CD4-positive, alpha-beta T cell (primary cell): ENCODE measurements at regions of chr3 and their contacts with region 1.

Region 1: GRCh38 chr3:43769471-43770425 is 79.0 kb downstream of the ABHD5 start:
- DNase-seq: peak; percentile 62 to 85 (median 69)
- ATAC-seq: peak; percentile 65
- H3K4me3 ChIP-seq: peak overlapping the region; percentile 4
- H3K4me3 Mint-ChIP-seq: no peak overlapping the region
- H3K27ac ChIP-seq: peak overlapping the region in 1 of 2 donors; percentile 71
- H3K27ac Mint-ChIP-seq: peak overlapping the region; percentile 64
- H3K4me1 ChIP-seq: peaks cover 42% of the 10 kb centered on the region
- H3K4me1 Mint-ChIP-seq: peaks cover 37% of the 10 kb centered on the region
- H3K27me3 ChIP-seq: no peaks in the 10 kb centered on the region
- H3K27me3 Mint-ChIP-seq: peaks cover 5% of the 10 kb centered on the region
- CTCF ChIP-seq: peak; percentile 90

Region 2: DNA sequence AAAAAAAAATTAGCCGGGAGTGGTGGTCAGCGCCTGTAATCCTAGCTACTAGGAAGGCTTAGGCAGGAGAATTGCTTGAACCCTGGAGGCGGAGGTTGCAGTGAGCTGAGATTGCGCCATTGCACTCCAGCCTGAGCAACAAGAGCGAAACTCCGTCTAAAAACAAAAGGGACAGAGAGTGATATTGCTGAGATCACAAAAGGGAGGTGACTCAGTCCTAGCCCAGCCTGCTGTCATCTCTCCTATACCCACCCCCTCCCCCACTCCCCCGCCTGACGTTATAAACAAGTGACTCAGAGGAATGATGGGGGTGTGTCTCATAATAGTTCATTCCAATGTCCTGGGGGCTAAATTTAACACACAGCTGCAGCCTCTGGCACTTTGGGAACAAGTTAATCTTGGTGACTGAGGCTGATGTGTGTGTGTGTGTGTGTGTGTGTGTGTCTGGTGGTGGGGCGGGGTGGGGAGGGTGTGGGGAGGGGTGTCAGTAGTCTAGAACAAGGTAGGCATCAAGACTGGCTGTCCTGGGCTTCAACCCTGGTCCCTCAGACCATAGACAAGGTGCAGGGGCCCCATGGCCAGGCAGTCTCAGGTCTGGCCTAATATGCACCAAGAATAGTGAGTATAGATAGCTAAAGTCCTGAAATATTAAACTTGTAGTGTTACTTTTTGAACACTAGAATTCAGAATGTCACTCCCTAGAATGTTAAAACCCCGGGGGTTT is 1085.7 kb before region 1 on chr3:
- CTCF ChIA-PET with region 1: no interaction called
- POLR2A ChIA-PET with region 1: no interaction called
- intact Hi-C with region 1: no loop called
- DNase-seq: peak in 2 of 14 experiments; percentile 27 to 29
- ATAC-seq: no peak
- H3K4me3 ChIP-seq: no peak overlapping the region
- H3K4me3 Mint-ChIP-seq: no peak overlapping the region
- H3K27ac ChIP-seq: no peak overlapping the region
- H3K27ac Mint-ChIP-seq: no peak overlapping the region
- H3K4me1 ChIP-seq: no peaks in the 10 kb centered on the region
- H3K4me1 Mint-ChIP-seq: no peaks in the 10 kb centered on the region
- H3K27me3 ChIP-seq: peaks cover 0 to 2% of the 10 kb centered on the region in 2 experiments
- H3K27me3 Mint-ChIP-seq: peaks cover 50% of the 10 kb centered on the region
- CTCF ChIP-seq: no peak

Region 3: DNA sequence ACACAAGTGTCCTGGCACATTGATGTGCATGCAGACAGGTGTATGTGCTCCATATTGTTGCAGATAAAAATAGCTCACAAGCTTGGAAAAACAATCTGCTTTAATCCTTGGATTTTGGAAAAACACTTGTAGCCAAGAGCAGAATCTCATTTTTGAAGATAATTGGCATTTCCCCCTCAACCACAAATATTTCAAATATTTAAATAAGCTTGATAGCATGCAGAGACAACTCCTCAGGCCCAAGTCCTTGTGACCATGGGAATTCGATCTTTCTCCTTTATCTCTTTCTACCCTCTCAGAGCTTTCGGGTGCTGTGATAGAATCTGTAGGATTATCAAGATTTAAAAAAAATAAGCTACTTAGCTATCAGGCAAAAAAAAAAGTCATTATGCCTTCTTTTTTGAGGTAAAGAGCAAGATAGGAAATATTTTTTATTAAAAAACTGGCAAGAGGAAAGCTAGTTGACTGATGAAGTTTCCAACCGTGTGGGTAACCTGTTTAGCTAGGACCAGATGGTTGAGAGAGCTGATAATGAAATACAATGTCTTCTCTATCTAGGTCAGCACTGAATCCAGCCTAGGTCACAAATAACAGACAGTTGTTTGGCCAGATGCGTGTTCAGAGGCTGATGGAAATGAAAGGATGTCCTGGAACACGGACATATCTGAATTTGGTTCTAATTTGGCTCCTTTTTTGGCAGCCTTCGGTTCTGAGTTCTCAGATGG is 538.3 kb before region 1 on chr3:
- CTCF ChIA-PET with region 1: no interaction called
- POLR2A ChIA-PET with region 1: no interaction called
- intact Hi-C with region 1: no loop called
- DNase-seq: no peak
- ATAC-seq: no peak
- H3K4me3 ChIP-seq: no peak overlapping the region
- H3K4me3 Mint-ChIP-seq: no peak overlapping the region
- H3K27ac ChIP-seq: no peak overlapping the region
- H3K27ac Mint-ChIP-seq: no peak overlapping the region
- H3K4me1 ChIP-seq: no peaks in the 10 kb centered on the region
- H3K4me1 Mint-ChIP-seq: peaks cover 10% of the 10 kb centered on the region
- H3K27me3 ChIP-seq: no peaks in the 10 kb centered on the region
- H3K27me3 Mint-ChIP-seq: no peaks in the 10 kb centered on the region
- CTCF ChIP-seq: no peak

Region 4: GRCh38 chr3:43659250-43659880 is 110.4 kb before region 1 on chr3:
- CTCF ChIA-PET with region 1: no interaction called
- POLR2A ChIA-PET with region 1: no interaction called
- intact Hi-C with region 1: no loop called
- DNase-seq: no peak
- ATAC-seq: no peak
- H3K4me3 ChIP-seq: no peak overlapping the region
- H3K4me3 Mint-ChIP-seq: no peak overlapping the region
- H3K27ac ChIP-seq: no peak overlapping the region
- H3K27ac Mint-ChIP-seq: no peak overlapping the region
- H3K4me1 ChIP-seq: no peaks in the 10 kb centered on the region
- H3K4me1 Mint-ChIP-seq: no peaks in the 10 kb centered on the region
- H3K27me3 ChIP-seq: no peaks in the 10 kb centered on the region
- H3K27me3 Mint-ChIP-seq: peaks cover 9% of the 10 kb centered on the region
- CTCF ChIP-seq: no peak

Region 5: GRCh38 chr3:43923104-43923882 is 153.5 kb after region 1 on chr3:
- CTCF ChIA-PET with region 1: no interaction called
- POLR2A ChIA-PET with region 1: no interaction called
- intact Hi-C with region 1: no loop called
- DNase-seq: no peak
- ATAC-seq: no peak
- H3K4me3 ChIP-seq: no peak overlapping the region
- H3K4me3 Mint-ChIP-seq: no peak overlapping the region
- H3K27ac ChIP-seq: no peak overlapping the region
- H3K27ac Mint-ChIP-seq: no peak overlapping the region
- H3K4me1 ChIP-seq: no peaks in the 10 kb centered on the region
- H3K4me1 Mint-ChIP-seq: no peaks in the 10 kb centered on the region
- H3K27me3 ChIP-seq: peaks cover 33 to 55% of the 10 kb centered on the region in 2 experiments
- H3K27me3 Mint-ChIP-seq: peaks cover 73% of the 10 kb centered on the region
- CTCF ChIP-seq: no peak

Region 6: DNA sequence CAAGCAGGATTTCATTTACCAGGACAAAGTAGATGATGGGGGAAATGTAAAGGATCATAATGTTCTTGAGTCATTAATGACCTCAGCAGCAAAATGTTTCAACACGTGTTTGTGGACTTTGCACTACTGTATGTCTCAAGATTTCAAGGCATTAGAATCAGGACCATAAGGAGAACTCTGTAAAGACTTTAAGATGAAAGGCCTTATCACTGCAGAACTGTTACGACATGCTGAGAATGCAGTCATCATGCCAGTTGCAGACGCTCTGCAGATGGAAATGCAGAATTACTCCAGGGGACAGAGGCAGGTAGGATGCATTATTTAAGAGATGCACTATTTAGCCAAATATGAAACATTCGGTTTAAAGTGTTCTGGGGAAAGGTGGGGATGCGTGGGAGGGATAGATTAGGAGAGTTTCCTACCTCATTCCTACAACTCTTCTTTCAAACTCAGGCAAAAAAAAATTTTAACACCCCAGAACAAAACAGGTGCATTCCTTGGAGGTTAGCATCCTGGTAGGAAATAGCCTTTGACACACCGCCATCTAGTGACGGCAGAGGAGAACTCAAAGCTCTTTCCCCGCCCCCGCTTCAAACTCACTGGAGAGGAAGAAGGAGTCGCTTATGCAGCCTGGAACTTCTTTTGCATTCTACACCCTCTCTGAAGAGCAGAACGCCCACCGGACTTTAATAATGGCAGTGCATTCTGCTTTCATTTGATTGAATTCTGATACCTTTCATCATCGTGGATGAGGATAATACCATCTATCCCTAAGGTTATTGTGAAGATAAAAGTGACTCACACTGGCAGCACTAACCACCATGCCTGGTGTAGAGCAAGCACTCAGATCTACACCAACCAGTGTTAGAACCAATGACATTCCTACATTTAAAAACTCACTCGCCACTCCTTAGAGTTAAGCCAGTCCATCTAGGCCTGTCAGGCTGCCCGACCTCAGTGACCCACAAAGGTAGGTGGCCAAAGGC is 428.8 kb after region 1 on chr3:
- CTCF ChIA-PET with region 1: no interaction called
- POLR2A ChIA-PET with region 1: no interaction called
- intact Hi-C with region 1: loop called in 1 of 2 experiments (anchors 5 kb)
- DNase-seq: peak; percentile 44 to 79 (median 55)
- ATAC-seq: peak; percentile 78
- H3K4me3 ChIP-seq: no peak overlapping the region
- H3K4me3 Mint-ChIP-seq: no peak overlapping the region
- H3K27ac ChIP-seq: no peak overlapping the region
- H3K27ac Mint-ChIP-seq: no peak overlapping the region
- H3K4me1 ChIP-seq: peaks cover 5% of the 10 kb centered on the region
- H3K4me1 Mint-ChIP-seq: no peaks in the 10 kb centered on the region
- H3K27me3 ChIP-seq: peaks cover under 1 to 10% of the 10 kb centered on the region in 2 experiments
- H3K27me3 Mint-ChIP-seq: peaks cover 43% of the 10 kb centered on the region
- CTCF ChIP-seq: peak; percentile 87